ENCODE measurements at regions of chr10 and their contacts with region 1.

Region 1: GRCh38 chr10:71696628-71697326 is 22.8 kb downstream of the C10orf105 start:
- DNase-seq: peak; percentile 65
- H3K4me3 Mint-ChIP-seq: no peak overlapping the region
- H3K27ac Mint-ChIP-seq: peak overlapping the region; percentile 60
- H3K4me1 Mint-ChIP-seq: peaks cover 52% of the 10 kb centered on the region
- H3K27me3 Mint-ChIP-seq: no peaks in the 10 kb centered on the region

Region 2: GRCh38 chr10:71314028-71314693 is 382.6 kb before region 1 on chr10:
- CTCF ChIA-PET with region 1: interaction called, 10 read pairs
- POLR2A ChIA-PET with region 1: no interaction called
- DNase-seq: peak; percentile 52
- H3K4me3 Mint-ChIP-seq: no peak overlapping the region
- H3K27ac Mint-ChIP-seq: no peak overlapping the region
- H3K4me1 Mint-ChIP-seq: peaks cover 25% of the 10 kb centered on the region
- H3K27me3 Mint-ChIP-seq: peaks cover 2% of the 10 kb centered on the region

Region 3: GRCh38 chr10:71708301-71708703 is 11.5 kb after region 1 on chr10:
- CTCF ChIA-PET with region 1: interaction called, 42 read pairs
- POLR2A ChIA-PET with region 1: no interaction called
- DNase-seq: peak; percentile 64
- H3K4me3 Mint-ChIP-seq: no peak overlapping the region
- H3K27ac Mint-ChIP-seq: peak overlapping the region; percentile 80
- H3K4me1 Mint-ChIP-seq: peaks cover 39% of the 10 kb centered on the region
- H3K27me3 Mint-ChIP-seq: no peaks in the 10 kb centered on the region

Region 4: GRCh38 chr10:71713135-71714030 is 16.6 kb after region 1 on chr10:
- CTCF ChIA-PET with region 1: interaction called, 42 read pairs
- POLR2A ChIA-PET with region 1: no interaction called
- DNase-seq: no peak
- H3K4me3 Mint-ChIP-seq: peak overlapping the region; percentile 55
- H3K27ac Mint-ChIP-seq: peak overlapping the region; percentile 97
- H3K4me1 Mint-ChIP-seq: peaks cover 58% of the 10 kb centered on the region
- H3K27me3 Mint-ChIP-seq: no peaks in the 10 kb centered on the region

Region 5: DNA sequence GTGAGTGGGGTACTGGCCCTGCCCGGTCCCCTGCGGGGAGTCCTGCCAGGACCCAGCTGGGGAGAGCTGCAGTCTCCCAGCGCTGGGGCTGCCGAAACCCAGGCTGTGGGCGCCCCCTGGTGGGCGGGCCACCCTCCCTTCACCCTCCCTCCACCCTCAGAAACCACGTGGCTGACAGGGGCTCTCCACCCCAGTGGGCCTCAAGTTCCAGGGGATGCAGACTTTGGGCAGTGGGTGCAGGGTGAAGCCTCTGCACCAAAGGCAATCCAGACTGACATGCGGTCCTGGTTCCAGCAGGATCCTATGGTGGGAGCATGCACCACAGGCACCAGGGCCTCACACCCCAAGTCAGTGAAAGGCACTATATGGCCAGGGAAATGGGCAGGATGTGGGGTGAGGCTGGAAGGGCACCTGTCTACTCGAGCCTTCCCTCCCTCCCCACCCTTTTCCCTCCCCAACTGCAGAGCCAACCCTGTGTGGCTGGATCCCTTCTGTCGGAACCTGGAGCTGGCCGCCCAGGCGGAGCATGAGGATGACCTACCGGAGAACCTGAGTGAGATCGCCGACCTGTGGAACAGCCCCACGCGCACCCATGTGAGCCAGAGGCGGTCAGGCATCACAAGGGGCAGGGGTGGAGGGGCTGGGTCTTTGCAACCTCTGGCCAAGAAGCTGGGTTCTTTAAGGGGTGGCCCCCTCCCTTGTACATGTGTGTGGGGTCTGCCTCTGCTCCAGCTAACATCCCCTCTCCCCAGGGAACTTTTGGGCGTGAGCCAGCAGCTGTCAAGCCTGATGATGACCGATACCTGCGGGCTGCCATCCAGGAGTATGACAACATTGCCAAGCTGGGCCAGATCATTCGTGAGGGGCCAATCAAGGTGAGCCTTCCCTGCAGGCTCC is 115.5 kb after region 1 on chr10:
- CTCF ChIA-PET with region 1: interaction called, 15 read pairs
- POLR2A ChIA-PET with region 1: no interaction called
- DNase-seq: peak; percentile 77
- H3K4me3 Mint-ChIP-seq: no peak overlapping the region
- H3K27ac Mint-ChIP-seq: no peak overlapping the region
- H3K4me1 Mint-ChIP-seq: peaks cover 2% of the 10 kb centered on the region
- H3K27me3 Mint-ChIP-seq: no peaks in the 10 kb centered on the region